ENCODE measurements at regions of chr2 and their contacts with region 1.

Region 1: GRCh38 chr2:54570925-54571694 is 115.0 kb downstream of the SPTBN1 start:
- DNase-seq: peak; percentile 62
- H3K4me3 Mint-ChIP-seq: peak overlapping the region; percentile 84
- H3K27ac Mint-ChIP-seq: peak overlapping the region; percentile 98
- H3K4me1 Mint-ChIP-seq: peaks cover 89% of the 10 kb centered on the region
- H3K27me3 Mint-ChIP-seq: no peaks in the 10 kb centered on the region
- CTCF ChIP-seq: no peak

Region 2: GRCh38 chr2:54531558-54531957 is 39.6 kb before region 1 on chr2:
- CTCF ChIA-PET with region 1: interaction called, 4 read pairs
- intact Hi-C with region 1: loop called (anchors 5 kb)
- DNase-seq: peak; percentile 68
- H3K4me3 Mint-ChIP-seq: peak overlapping the region; percentile 55
- H3K27ac Mint-ChIP-seq: peak overlapping the region; percentile 97
- H3K4me1 Mint-ChIP-seq: peaks cover 83% of the 10 kb centered on the region
- H3K27me3 Mint-ChIP-seq: no peaks in the 10 kb centered on the region
- CTCF ChIP-seq: no peak

Region 3: GRCh38 chr2:54558188-54559005 is 12.7 kb before region 1 on chr2:
- CTCF ChIA-PET with region 1: interaction called, 15 read pairs
- intact Hi-C with region 1: loop called (anchors 2 kb)
- DNase-seq: peak; percentile 72
- H3K4me3 Mint-ChIP-seq: peak overlapping the region; percentile 84
- H3K27ac Mint-ChIP-seq: peak overlapping the region; percentile 93
- H3K4me1 Mint-ChIP-seq: peaks cover 36% of the 10 kb centered on the region
- H3K27me3 Mint-ChIP-seq: no peaks in the 10 kb centered on the region
- CTCF ChIP-seq: no peak

Region 4: GRCh38 chr2:54634564-54635511 is 63.7 kb after region 1 on chr2:
- CTCF ChIA-PET with region 1: interaction called, 5 read pairs
- intact Hi-C with region 1: loop called (anchors 5 kb)
- DNase-seq: peak; percentile 49
- H3K4me3 Mint-ChIP-seq: peak overlapping the region; percentile 34
- H3K27ac Mint-ChIP-seq: peak overlapping the region; percentile 83
- H3K4me1 Mint-ChIP-seq: peaks cover 76% of the 10 kb centered on the region
- H3K27me3 Mint-ChIP-seq: no peaks in the 10 kb centered on the region
- CTCF ChIP-seq: no peak

Region 5: GRCh38 chr2:54838585-54839035 is 267.5 kb after region 1 on chr2:
- CTCF ChIA-PET with region 1: no interaction called
- intact Hi-C with region 1: no loop called
- DNase-seq: peak; percentile 63
- H3K4me3 Mint-ChIP-seq: no peak overlapping the region
- H3K27ac Mint-ChIP-seq: no peak overlapping the region
- H3K4me1 Mint-ChIP-seq: no peaks in the 10 kb centered on the region
- H3K27me3 Mint-ChIP-seq: peaks cover 15% of the 10 kb centered on the region
- CTCF ChIP-seq: peak; percentile 71

Measured in Calu3 (cell line).